Heart right ventricle (tissue), 16 donors: ENCODE measurements at regions of chr22 and their contacts with region 1.

Region 1: GRCh38 chr22:19868773-19869471 is 14.2 kb upstream of the GNB1L start:
- DNase-seq: no peak
- ATAC-seq: no peak
- H3K4me3 ChIP-seq: no peak overlapping the region
- H3K27ac ChIP-seq: no peak overlapping the region
- H3K4me1 ChIP-seq: peaks cover 0 to 4% (median 0%) of the 10 kb centered on the region in 9 donors
- H3K27me3 ChIP-seq: no peaks in the 10 kb centered on the region
- CTCF ChIP-seq: no peak

Region 2: DNA sequence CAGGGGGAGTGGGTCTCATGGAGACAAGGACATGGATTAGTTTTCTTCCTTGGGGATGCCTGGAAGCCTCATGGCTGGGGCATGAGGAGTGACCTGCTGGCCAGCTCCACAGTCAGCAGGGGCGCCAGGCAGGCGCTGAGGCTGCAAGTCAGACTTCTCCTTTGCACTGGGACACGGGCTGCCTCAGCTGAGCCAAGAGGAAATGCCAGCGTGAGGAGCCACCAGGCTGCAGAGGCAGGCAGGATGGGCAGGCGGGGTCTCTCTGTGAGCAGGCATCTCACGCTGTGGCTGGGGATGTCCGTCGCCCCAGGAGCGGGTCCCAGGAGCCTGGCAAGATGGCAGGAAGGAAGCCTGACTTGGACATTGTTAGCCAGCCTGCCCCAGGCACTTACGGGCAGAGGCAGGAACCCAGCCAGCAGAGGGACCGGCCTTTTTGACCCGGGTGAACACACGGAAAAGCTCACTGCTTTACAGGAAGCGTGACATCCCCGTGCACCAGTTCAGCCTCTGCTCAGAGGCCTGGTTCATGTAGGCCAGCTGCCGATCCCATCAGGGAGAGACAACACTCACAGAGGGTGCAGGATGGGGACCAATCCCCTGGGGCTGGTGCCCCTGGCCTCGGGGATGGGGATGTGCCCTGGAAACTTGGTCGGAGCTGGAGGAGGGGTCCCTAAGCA is 24.4 kb before region 1 on chr22:
- intact Hi-C with region 1: no loop called
- DNase-seq: peak; percentile 29 to 59
- ATAC-seq: peak; percentile 59 to 83 (median 66)
- H3K4me3 ChIP-seq: no peak overlapping the region
- H3K27ac ChIP-seq: peak overlapping the region in 7 of 10 donors; percentile 13 to 76 (median 39)
- H3K4me1 ChIP-seq: peaks cover 0 to 32% (median 23%) of the 10 kb centered on the region in 9 donors
- H3K27me3 ChIP-seq: no peaks in the 10 kb centered on the region
- CTCF ChIP-seq: peak in 1 of 9 donors; percentile 12

Region 3: GRCh38 chr22:19930551-19931486 is 61.9 kb after region 1 on chr22:
- intact Hi-C with region 1: loop called in 1 of 10 experiments (anchors 2 kb)
- DNase-seq: no peak
- ATAC-seq: peak in 1 of 8 donors; percentile 14
- H3K4me3 ChIP-seq: no peak overlapping the region
- H3K27ac ChIP-seq: no peak overlapping the region
- H3K4me1 ChIP-seq: peaks cover 0 to 9% (median 0%) of the 10 kb centered on the region in 9 donors
- H3K27me3 ChIP-seq: no peaks in the 10 kb centered on the region
- CTCF ChIP-seq: no peak